ENCODE measurements at regions of chr1 and their contacts with region 1.

Region 1: GRCh38 chr1:224922404-224923164 is 6.9 kb upstream of the DNAH14 start:
- DNase-seq: peak; percentile 53 to 55
- H3K4me3 ChIP-seq: no peak overlapping the region
- H3K4me3 Mint-ChIP-seq: no peak overlapping the region
- H3K27ac Mint-ChIP-seq: no peak overlapping the region
- H3K4me1 ChIP-seq: peaks cover 6% of the 10 kb centered on the region; the same call in 1 of the 2 replicates
- H3K4me1 Mint-ChIP-seq: peaks cover 13% of the 10 kb centered on the region
- H3K27me3 ChIP-seq: no peaks in the 10 kb centered on the region
- H3K27me3 Mint-ChIP-seq: no peaks in the 10 kb centered on the region
- CTCF ChIP-seq: peak; percentile 67 to 69

Region 2: DNA sequence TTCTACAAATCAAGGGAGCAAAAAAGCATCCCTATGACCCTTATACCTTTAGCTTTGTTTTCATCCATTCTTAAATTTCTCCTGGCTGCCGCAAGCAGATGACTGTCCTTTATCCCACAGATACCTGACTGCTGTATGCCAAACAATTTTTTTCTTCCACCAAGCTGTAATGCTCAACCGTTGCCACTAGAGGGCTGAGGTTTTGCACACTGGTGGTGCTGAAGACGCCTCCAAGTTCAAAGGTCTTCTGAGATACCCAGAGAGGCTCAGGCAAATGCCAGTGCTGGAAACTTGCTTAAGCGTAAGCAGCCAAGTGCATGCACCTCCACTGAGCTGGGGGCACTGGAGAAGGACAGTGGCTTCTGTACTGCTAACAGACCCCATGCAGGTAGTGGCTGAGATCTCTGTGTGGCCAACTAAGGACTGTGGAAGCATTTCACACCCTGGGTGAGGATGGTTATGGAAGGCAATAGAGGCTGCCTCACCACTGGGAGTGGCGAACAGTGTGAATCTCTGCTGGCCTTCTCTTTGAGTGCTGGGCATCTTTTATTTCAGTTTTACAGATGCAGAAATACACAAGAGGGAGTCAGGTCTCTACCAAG is 277.9 kb before region 1 on chr1:
- CTCF ChIA-PET with region 1: interaction called, 25 read pairs
- POLR2A ChIA-PET with region 1: no interaction called
- intact Hi-C with region 1: loop called (anchors 1 kb)
- DNase-seq: peak; percentile 74 to 78
- H3K4me3 ChIP-seq: no peak overlapping the region
- H3K4me3 Mint-ChIP-seq: no peak overlapping the region
- H3K27ac Mint-ChIP-seq: no peak overlapping the region
- H3K4me1 ChIP-seq: peaks cover 2% of the 10 kb centered on the region
- H3K4me1 Mint-ChIP-seq: no peaks in the 10 kb centered on the region
- H3K27me3 ChIP-seq: no peaks in the 10 kb centered on the region
- H3K27me3 Mint-ChIP-seq: no peaks in the 10 kb centered on the region
- CTCF ChIP-seq: peak; percentile 91

Region 3: GRCh38 chr1:224656392-224656791 is 266.2 kb before region 1 on chr1:
- CTCF ChIA-PET with region 1: no interaction called
- POLR2A ChIA-PET with region 1: no interaction called
- intact Hi-C with region 1: no loop called
- DNase-seq: no peak
- H3K4me3 ChIP-seq: no peak overlapping the region
- H3K4me3 Mint-ChIP-seq: no peak overlapping the region
- H3K27ac Mint-ChIP-seq: no peak overlapping the region
- H3K4me1 ChIP-seq: no peaks in the 10 kb centered on the region
- H3K4me1 Mint-ChIP-seq: no peaks in the 10 kb centered on the region
- H3K27me3 ChIP-seq: no peaks in the 10 kb centered on the region
- H3K27me3 Mint-ChIP-seq: peaks cover 8% of the 10 kb centered on the region
- CTCF ChIP-seq: no peak

Region 4: GRCh38 chr1:224851210-224851847 is 71.3 kb before region 1 on chr1:
- CTCF ChIA-PET with region 1: interaction called, 14 read pairs
- POLR2A ChIA-PET with region 1: no interaction called
- intact Hi-C with region 1: loop called (anchors 1 kb)
- DNase-seq: peak; percentile 43 to 54
- H3K4me3 ChIP-seq: no peak overlapping the region
- H3K4me3 Mint-ChIP-seq: no peak overlapping the region
- H3K27ac Mint-ChIP-seq: no peak overlapping the region
- H3K4me1 ChIP-seq: no peaks in the 10 kb centered on the region
- H3K4me1 Mint-ChIP-seq: no peaks in the 10 kb centered on the region
- H3K27me3 ChIP-seq: no peaks in the 10 kb centered on the region
- H3K27me3 Mint-ChIP-seq: no peaks in the 10 kb centered on the region
- CTCF ChIP-seq: peak; percentile 39 to 53

Region 5: DNA sequence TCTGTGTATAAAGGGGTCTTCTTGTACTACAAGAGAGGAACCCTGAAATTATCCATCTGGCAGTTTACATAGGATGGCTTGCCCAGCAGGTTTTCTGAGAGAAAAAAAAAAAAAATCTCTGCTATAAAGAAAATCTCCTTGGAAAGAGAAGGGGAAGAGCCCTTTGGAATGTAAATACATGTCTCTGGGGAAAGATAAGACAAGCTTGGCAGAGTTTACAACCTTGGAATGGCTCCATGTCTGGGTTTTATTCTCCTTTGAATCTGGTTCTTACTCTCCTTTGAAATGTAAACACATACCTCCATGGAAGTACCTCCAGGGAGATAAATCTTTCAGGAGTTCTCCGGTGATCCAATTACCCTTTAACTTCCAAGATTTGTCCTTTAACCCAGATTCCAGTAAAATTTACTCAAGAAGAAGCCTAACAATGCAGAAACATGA is 38.2 kb before region 1 on chr1:
- CTCF ChIA-PET with region 1: interaction called, 7 read pairs
- POLR2A ChIA-PET with region 1: no interaction called
- intact Hi-C with region 1: loop called (anchors 2 kb)
- DNase-seq: peak; percentile 51
- H3K4me3 ChIP-seq: no peak overlapping the region
- H3K4me3 Mint-ChIP-seq: peak overlapping the region; percentile 12
- H3K27ac Mint-ChIP-seq: peak overlapping the region; percentile 6
- H3K4me1 ChIP-seq: peaks cover 52% of the 10 kb centered on the region
- H3K4me1 Mint-ChIP-seq: peaks cover 49% of the 10 kb centered on the region
- H3K27me3 ChIP-seq: no peaks in the 10 kb centered on the region
- H3K27me3 Mint-ChIP-seq: no peaks in the 10 kb centered on the region
- CTCF ChIP-seq: no peak

Region 6: GRCh38 chr1:224933584-224933983 is 11.0 kb after region 1 on chr1:
- CTCF ChIA-PET with region 1: no interaction called
- POLR2A ChIA-PET with region 1: no interaction called
- intact Hi-C with region 1: no loop called
- DNase-seq: no peak
- H3K4me3 ChIP-seq: no peak overlapping the region
- H3K4me3 Mint-ChIP-seq: no peak overlapping the region
- H3K27ac Mint-ChIP-seq: no peak overlapping the region
- H3K4me1 ChIP-seq: no peaks in the 10 kb centered on the region; the same call in 1 of the 2 replicates
- H3K4me1 Mint-ChIP-seq: no peaks in the 10 kb centered on the region
- H3K27me3 ChIP-seq: no peaks in the 10 kb centered on the region
- H3K27me3 Mint-ChIP-seq: no peaks in the 10 kb centered on the region
- CTCF ChIP-seq: no peak

Region 7: DNA sequence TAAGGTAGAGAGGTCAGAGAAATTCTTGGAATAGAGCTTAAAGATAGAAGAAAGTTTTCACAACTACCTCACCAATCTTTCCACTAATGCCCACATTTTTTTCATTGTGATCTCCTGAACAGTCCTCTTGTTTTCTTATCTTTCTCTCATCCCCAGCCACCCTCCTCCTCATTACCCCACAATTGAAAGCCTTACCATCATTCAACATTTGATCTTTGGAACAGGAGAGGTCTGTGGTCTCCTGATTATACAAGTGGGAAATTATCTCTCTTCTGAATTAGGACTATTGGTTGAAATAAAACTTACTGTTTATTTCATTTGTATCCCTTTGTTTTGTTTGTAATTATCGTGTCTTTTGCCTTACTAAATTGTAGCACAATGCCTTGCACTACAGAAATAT is 36.5 kb after region 1 on chr1:
- CTCF ChIA-PET with region 1: no interaction called
- POLR2A ChIA-PET with region 1: no interaction called
- intact Hi-C with region 1: no loop called
- DNase-seq: no peak
- H3K4me3 ChIP-seq: no peak overlapping the region
- H3K4me3 Mint-ChIP-seq: no peak overlapping the region
- H3K27ac Mint-ChIP-seq: no peak overlapping the region
- H3K4me1 ChIP-seq: no peaks in the 10 kb centered on the region
- H3K4me1 Mint-ChIP-seq: no peaks in the 10 kb centered on the region
- H3K27me3 ChIP-seq: no peaks in the 10 kb centered on the region
- H3K27me3 Mint-ChIP-seq: no peaks in the 10 kb centered on the region
- CTCF ChIP-seq: no peak